ENCODE measurements at regions of chr11 and their contacts with region 1.

Region 1: GRCh38 chr11:18634140-18635032 is at the start of gene SPTY2D1:
- DNase-seq: peak; percentile 92 to 99 (median 98)
- ATAC-seq: peak; percentile 89
- H3K4me3 Mint-ChIP-seq: peak within 1 kb of the TSS; percentile 87 to 96 (median 94)
- H3K27ac Mint-ChIP-seq: peak within 1 kb of the TSS; percentile 95 to 100 (median 99)
- H3K4me1 Mint-ChIP-seq: peaks cover 10 to 42% (median 38%) of the 10 kb centered on the region in 4 donors
- H3K27me3 Mint-ChIP-seq: peaks cover 0 to 1% (median 0%) of the 10 kb centered on the region in 5 donors
- polyA plus RNA-seq, gene SPTY2D1: 4.7 to 11.0 (median 7.3) TPM

Region 2: GRCh38 chr11:18526521-18527296 is 107.7 kb before region 1 on chr11 and contains the start of gene TSG101:
- POLR2A ChIA-PET with region 1: interaction called, 35 read pairs
- DNase-seq: peak; percentile 83 to 99 (median 90)
- ATAC-seq: peak; percentile 85 to 86
- H3K4me3 Mint-ChIP-seq: peak within 1 kb of the TSS; percentile 98 to 100 (median 99)
- H3K27ac Mint-ChIP-seq: peak within 1 kb of the TSS; percentile 100
- H3K4me1 Mint-ChIP-seq: peaks cover 27 to 62% (median 54%) of the 10 kb centered on the region in 4 donors
- H3K27me3 Mint-ChIP-seq: peaks cover 0 to 3% (median 0%) of the 10 kb centered on the region in 5 donors
- polyA plus RNA-seq, gene TSG101: 31.8 to 58.7 (median 35.8) TPM

Region 3: DNA sequence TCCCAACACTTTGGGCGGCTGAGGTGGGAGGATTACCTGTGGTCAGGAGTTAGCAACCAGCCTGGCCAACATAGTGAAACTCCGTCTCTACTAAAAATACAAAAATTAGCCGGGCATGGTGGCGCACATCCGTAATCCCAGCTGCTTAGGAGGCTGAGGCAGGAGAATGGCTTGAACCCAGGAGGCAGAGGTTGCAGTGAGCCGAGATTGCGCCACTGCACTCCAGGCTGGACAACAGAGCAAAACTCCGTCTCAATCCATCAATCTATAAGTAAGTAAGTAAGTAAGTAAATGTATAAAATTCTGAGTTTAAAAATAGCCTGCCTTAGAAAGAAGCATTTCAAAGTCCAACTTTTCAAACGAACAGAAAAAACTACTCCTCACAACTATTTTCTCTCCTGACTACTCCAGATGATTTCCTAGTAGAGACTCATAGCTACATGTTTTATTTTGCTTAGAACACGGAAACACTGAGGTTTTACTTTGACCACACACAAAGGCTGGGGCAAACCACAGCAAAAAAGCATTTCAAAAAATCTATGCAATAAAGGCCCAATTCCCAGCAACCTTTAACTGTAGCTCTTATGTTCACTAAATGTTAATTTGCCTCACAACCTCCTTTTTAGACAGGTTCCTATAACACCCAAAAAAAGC is 16.6 kb before region 1 on chr11:
- POLR2A ChIA-PET with region 1: interaction called, 24 read pairs
- DNase-seq: peak in 8 of 10 donors; percentile 31 to 82 (median 60)
- ATAC-seq: peak; percentile 96
- H3K4me3 Mint-ChIP-seq: peak overlapping the region; percentile 32 to 78 (median 72)
- H3K27ac Mint-ChIP-seq: peak overlapping the region in 9 of 10 donors; percentile 0 to 83 (median 28)
- H3K4me1 Mint-ChIP-seq: peaks cover 23 to 64% (median 59%) of the 10 kb centered on the region in 4 donors
- H3K27me3 Mint-ChIP-seq: no peaks in the 10 kb centered on the region

Region 4: DNA sequence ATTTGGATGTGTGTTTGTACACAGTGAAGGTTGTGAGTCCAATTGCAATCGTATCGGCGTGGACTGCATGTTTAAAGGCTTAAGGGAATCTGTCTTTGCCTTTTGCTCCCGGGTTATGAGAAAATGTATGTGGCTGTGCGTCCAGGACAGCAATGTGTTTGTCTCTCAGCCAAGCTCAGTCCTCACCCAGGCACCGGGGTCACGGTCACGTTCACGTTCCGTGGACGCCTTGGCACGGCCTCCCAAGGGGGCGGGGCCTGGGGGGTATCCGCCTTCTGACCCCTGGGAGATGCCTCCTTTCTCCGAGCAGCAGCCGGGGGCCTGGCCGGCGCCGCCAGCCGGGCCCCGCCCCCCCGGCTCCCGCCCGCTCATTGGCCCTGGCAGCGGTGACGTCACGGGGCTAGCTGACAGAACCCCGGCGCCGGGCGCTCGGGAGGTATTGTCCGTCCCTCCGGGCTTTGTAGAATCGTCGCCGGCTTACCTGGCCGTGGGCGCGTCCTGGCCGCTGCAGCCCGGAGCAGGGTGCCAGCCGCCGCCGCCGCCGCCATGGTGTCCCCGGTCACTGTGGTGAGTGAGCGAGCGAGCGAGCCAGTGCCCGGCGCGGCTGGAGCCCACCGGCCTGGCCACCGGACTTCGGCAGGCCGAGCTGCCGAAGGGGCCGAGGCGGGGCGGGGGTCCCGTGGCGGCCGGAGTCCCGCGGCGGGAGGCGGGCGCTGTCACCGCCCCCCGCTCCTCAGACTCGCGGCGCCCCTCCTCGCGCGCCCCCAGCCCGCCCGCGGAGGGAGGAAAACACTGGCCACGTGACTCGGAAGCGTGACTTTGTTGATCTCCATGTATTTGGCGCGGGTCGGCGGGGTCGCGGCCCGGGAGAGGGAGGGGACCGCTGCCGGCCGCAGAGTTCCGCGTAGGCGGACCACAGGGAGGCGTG is 64.2 kb after region 1 on chr11 and contains the start of gene TMEM86A:
- POLR2A ChIA-PET with region 1: interaction called, 14 read pairs
- DNase-seq: peak; percentile 86 to 94 (median 88)
- ATAC-seq: peak; percentile 91 to 93
- H3K4me3 Mint-ChIP-seq: peak within 1 kb of the TSS; percentile 70 to 90 (median 83)
- H3K27ac Mint-ChIP-seq: peak within 1 kb of the TSS; percentile 44 to 93 (median 90)
- H3K4me1 Mint-ChIP-seq: peaks cover 15 to 24% (median 21%) of the 10 kb centered on the region in 4 donors
- H3K27me3 Mint-ChIP-seq: no peaks in the 10 kb centered on the region
- polyA plus RNA-seq, gene TMEM86A: 0.43 to 1.9 (median 1.2) TPM

Measured in naive thymus-derived CD8-positive, alpha-beta T cell (primary cell).